CD4-positive, alpha-beta memory T cell (primary cell): ENCODE measurements at regions of chr18 and their contacts with region 1.

Region 1: GRCh38 chr18:45212181-45213039 is 402.9 kb upstream of the SLC14A2 start:
- DNase-seq: peak; percentile 45 to 54 (median 48)
- H3K4me3 ChIP-seq: no peak overlapping the region
- H3K4me3 Mint-ChIP-seq: no peak overlapping the region
- H3K27ac ChIP-seq: no peak overlapping the region
- H3K27ac Mint-ChIP-seq: no peak overlapping the region
- H3K4me1 ChIP-seq: no peaks in the 10 kb centered on the region
- H3K4me1 Mint-ChIP-seq: no peaks in the 10 kb centered on the region
- H3K27me3 ChIP-seq: no peaks in the 10 kb centered on the region
- H3K27me3 Mint-ChIP-seq: peaks cover 2 to 6% of the 10 kb centered on the region in 2 donors

Region 2: DNA sequence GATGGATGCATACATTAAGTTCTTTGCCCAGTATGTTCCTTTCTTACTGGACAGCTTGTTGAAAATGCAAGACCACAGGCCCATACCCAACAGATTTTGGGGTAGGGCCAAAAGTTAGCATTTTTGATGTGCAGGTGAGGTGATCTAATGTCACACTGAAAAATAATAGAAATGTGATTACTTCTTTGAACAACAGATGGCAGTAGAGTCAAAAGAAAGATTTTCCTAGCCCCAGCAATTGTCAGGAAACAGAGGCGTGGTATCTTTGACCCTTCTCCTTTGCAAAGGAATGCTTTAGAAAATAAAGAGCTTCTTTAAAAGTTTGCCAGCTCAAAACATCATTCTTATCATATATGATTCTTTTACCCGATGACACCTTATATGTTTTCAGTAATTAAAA is 1591.5 kb before region 1 on chr18:
- CTCF ChIA-PET with region 1: interaction called, 16 read pairs
- POLR2A ChIA-PET with region 1: no interaction called
- intact Hi-C with region 1: no loop called
- DNase-seq: no peak
- H3K4me3 ChIP-seq: no peak overlapping the region
- H3K4me3 Mint-ChIP-seq: no peak overlapping the region
- H3K27ac ChIP-seq: no peak overlapping the region
- H3K27ac Mint-ChIP-seq: no peak overlapping the region
- H3K4me1 ChIP-seq: no peaks in the 10 kb centered on the region
- H3K4me1 Mint-ChIP-seq: no peaks in the 10 kb centered on the region
- H3K27me3 ChIP-seq: no peaks in the 10 kb centered on the region
- H3K27me3 Mint-ChIP-seq: no peaks in the 10 kb centered on the region

Region 3: DNA sequence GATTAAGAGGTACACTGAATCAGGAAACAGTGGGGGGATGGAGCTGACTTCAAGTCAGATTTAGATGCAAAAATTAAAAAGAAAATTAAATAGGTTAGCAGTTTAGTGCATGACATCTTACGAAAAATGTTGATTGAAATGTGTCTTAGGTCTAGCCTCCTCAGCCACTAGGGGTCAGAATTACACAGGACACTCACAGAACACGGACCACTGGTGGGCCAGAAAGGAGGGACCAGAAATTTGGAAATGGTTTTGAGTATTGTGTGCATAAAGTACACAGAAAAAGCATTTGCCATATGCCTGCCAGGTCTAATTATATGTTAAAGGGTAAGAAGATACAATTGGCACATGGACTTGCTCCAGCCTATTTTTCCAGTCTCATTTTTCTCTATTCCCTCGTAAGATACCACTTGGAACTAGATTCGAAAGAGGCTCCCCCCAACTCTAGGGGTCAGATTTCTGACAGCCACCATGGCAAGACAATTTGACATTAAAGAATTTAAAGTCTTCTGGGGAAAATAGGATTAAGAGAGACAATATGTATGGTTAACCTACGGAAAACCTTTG is 1082.0 kb before region 1 on chr18:
- CTCF ChIA-PET with region 1: no interaction called
- POLR2A ChIA-PET with region 1: no interaction called
- intact Hi-C with region 1: loop called (anchors 10 kb)
- DNase-seq: no peak
- H3K4me3 ChIP-seq: no peak overlapping the region
- H3K4me3 Mint-ChIP-seq: no peak overlapping the region
- H3K27ac ChIP-seq: no peak overlapping the region
- H3K27ac Mint-ChIP-seq: no peak overlapping the region
- H3K4me1 ChIP-seq: no peaks in the 10 kb centered on the region
- H3K4me1 Mint-ChIP-seq: no peaks in the 10 kb centered on the region
- H3K27me3 ChIP-seq: no peaks in the 10 kb centered on the region
- H3K27me3 Mint-ChIP-seq: no peaks in the 10 kb centered on the region

Region 4: GRCh38 chr18:44579028-44579702 is 633.2 kb before region 1 on chr18:
- CTCF ChIA-PET with region 1: interaction called, 3 read pairs
- POLR2A ChIA-PET with region 1: no interaction called
- intact Hi-C with region 1: loop called (anchors 10 kb)
- DNase-seq: no peak
- H3K4me3 ChIP-seq: no peak overlapping the region
- H3K4me3 Mint-ChIP-seq: no peak overlapping the region
- H3K27ac ChIP-seq: no peak overlapping the region
- H3K27ac Mint-ChIP-seq: peak overlapping the region in 1 of 7 donors; percentile 2
- H3K4me1 ChIP-seq: no peaks in the 10 kb centered on the region
- H3K4me1 Mint-ChIP-seq: peaks cover 0 to 2% (median 0%) of the 10 kb centered on the region in 4 donors
- H3K27me3 ChIP-seq: no peaks in the 10 kb centered on the region
- H3K27me3 Mint-ChIP-seq: peaks cover 3 to 4% of the 10 kb centered on the region in 2 donors

Region 5: DNA sequence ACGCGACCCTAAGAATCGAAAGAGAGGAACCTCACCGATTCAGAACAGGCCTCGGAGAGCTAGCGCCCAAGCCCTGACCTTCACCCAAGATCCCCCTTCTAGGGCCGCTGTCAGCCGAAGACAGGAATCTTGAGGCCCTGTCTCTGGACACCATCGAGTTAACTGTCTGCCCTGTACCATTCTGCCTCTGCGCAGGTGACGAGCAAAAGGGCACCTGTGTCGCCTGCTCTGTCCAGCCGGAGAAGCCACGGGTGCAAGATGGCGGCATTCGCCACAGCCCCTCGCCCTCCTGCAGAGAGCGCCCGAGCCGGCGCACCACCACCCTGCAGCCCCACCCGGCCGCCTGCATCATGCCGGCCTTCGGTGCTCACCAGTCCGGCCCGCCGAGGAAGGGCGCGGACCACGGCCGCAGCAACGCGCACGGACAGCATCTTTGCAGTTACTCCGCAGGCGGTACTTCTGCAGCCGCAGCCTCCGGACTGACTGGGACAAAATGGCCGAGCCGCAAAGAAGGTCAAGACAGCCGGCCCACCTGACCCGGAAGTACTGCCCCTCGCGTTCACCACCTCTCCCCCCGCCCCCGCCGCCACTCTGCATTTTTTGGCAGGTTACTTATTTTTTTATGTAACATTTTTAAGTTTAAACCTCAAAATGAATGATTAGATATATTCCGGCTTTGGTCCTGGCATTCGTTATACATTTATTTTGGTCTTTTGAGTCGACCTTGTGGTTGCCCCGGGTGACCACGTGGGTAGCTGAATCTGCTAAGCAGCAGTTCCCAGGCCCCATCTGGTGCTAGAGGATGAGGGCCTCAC is 885.6 kb after region 1 on chr18 and contains the start of gene ATP5F1A:
- CTCF ChIA-PET with region 1: no interaction called
- POLR2A ChIA-PET with region 1: no interaction called
- intact Hi-C with region 1: no loop called
- DNase-seq: peak; percentile 82 to 90 (median 86)
- H3K4me3 ChIP-seq: peak within 1 kb of the TSS; percentile 39 to 95
- H3K4me3 Mint-ChIP-seq: peak within 1 kb of the TSS; percentile 92 to 99 (median 98)
- H3K27ac ChIP-seq: peak within 1 kb of the TSS; percentile 93
- H3K27ac Mint-ChIP-seq: peak within 1 kb of the TSS; percentile 94 to 99 (median 98)
- H3K4me1 ChIP-seq: peaks cover 47% of the 10 kb centered on the region
- H3K4me1 Mint-ChIP-seq: peaks cover 14 to 40% (median 25%) of the 10 kb centered on the region in 4 donors
- H3K27me3 ChIP-seq: no peaks in the 10 kb centered on the region
- H3K27me3 Mint-ChIP-seq: no peaks in the 10 kb centered on the region
- total RNA-seq, gene ATP5F1A: 212 to 225 TPM